Mammary epithelial cell (primary cell): ENCODE measurements at regions of chr1 and their contacts with region 1.

Region 1: DNA sequence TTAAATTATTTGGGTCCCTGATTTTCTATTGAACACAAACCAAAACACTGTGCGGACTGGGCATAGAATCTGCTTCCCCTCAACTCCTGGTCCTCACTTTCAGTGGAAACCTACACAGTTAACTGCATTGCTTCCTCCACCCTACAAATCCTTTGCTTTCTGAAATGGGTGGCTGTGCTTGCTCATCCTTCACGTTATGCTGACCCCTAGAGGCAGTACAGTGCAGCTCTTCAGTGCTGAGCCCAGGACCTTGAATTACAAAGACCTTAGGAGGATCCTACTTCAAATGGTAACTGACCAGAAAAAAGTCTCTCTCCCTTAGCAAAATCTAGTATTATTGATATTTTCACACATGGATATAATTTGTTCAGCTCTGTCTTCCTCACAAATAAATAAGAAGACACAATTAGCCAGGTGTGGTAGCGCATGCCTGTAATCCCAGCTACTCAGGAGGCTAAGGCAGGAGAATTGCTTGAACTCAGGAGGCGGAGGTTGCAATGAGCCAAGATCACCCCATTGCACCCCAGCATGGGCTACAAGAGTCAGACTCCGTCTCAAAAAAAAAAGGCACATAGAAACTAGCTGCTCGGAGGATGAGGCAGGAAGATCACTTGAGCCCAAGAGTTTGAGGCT is 63.4 kb upstream of the L1TD1 start:
- DNase-seq: peak; percentile 25
- H3K4me3 ChIP-seq: no peak overlapping the region
- H3K27ac ChIP-seq: no peak overlapping the region
- H3K4me1 ChIP-seq: no peaks in the 10 kb centered on the region
- H3K27me3 ChIP-seq: no peaks in the 10 kb centered on the region
- CTCF ChIP-seq: peak; percentile 93 to 97

Region 2: GRCh38 chr1:60969971-60970509 is 1161.2 kb before region 1 on chr1:
- CTCF ChIA-PET with region 1: no interaction called
- dilution Hi-C with region 1: no loop called
- in situ Hi-C with region 1: no loop called
- intact Hi-C with region 1: loop called (anchors 5 kb)
- DNase-seq: peak; percentile 46
- H3K4me3 ChIP-seq: no peak overlapping the region
- H3K27ac ChIP-seq: no peak overlapping the region
- H3K4me1 ChIP-seq: peaks cover 33% of the 10 kb centered on the region
- H3K27me3 ChIP-seq: no peaks in the 10 kb centered on the region
- CTCF ChIP-seq: peak; percentile 47 to 52

Region 3: DNA sequence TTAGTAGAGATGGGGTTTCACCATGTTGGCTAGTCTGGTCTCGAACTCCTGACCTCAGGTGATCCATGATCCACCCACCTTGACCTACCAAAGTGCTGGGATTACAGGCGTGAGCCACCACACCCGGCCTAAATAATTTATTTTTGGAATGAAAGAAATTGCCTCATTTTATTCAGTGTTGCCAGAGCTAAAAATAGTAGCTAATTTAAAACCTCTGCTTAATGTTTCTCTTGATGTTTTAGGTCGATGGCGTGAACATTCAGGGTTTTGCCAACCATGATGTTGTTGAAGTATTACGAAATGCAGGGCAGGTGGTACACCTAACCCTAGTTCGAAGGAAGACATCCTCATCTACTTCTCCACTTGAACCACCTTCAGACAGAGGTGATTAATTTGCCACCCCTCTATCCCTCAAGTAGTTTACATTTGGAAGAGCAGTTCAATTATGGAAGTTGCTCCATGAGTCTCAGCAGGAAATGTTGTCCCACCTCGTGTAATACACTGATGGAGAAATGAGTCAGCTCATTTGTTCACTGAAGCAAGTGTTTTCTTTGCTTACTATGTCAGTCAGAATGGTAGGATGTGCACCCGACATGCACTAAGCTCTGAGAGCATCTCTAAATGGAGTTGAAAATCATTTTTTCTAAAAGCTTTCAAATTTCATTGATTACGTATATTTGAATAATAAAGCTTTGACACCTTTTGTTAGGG is 334.0 kb before region 1 on chr1:
- CTCF ChIA-PET with region 1: interaction called, 13 read pairs
- dilution Hi-C with region 1: no loop called
- in situ Hi-C with region 1: no loop called
- intact Hi-C with region 1: no loop called
- DNase-seq: peak; percentile 4
- H3K4me3 ChIP-seq: no peak overlapping the region
- H3K27ac ChIP-seq: no peak overlapping the region
- H3K4me1 ChIP-seq: no peaks in the 10 kb centered on the region
- H3K27me3 ChIP-seq: no peaks in the 10 kb centered on the region
- CTCF ChIP-seq: no peak

Region 4: DNA sequence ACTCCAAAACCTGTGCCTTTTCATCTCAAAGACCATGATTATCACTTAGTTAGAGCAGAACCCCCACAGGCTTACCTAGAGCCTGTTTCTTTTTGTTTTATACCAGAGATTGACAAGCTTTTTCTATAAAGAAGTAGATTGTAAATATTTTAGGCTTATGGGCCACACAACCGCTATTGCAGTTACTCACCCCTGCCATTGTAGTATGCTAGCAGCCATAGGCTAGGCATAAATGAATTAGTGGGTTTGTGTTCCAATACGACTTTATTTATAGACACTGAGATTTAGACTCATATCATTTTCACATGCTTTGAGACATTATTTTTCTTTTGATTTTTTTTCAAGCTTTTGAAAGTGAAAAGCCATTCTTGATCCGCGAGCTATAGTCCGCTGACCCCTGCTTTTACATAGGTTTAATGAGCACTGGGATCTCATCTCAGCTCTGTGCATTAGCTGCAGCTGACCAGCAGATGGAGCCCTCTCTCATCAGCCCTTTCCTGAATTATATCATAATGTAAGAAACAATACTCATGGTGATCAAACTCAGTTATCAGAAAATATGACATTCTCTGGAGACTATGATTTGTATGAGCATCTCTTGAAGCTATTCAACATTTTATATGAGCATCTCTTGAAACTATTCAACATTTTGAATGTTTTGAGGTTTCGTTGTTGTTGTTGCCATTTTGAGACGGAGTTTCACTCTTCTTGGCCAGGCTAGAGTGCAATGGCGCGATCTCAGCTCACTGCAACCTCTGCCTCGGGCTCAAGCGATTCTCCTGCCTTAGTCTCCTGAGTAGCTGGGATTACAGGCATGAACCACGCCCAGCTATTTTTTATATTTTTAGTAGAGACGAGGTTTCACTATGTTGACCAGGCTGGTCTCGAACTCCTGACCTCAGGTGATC is 48.5 kb before region 1 on chr1:
- CTCF ChIA-PET with region 1: interaction called, 22 read pairs
- dilution Hi-C with region 1: no loop called
- in situ Hi-C with region 1: no loop called
- intact Hi-C with region 1: loop called (anchors 1 kb)
- DNase-seq: peak; percentile 22
- H3K4me3 ChIP-seq: no peak overlapping the region
- H3K27ac ChIP-seq: no peak overlapping the region
- H3K4me1 ChIP-seq: no peaks in the 10 kb centered on the region
- H3K27me3 ChIP-seq: no peaks in the 10 kb centered on the region
- CTCF ChIP-seq: peak; percentile 88 to 96

Region 5: GRCh38 chr1:62218604-62219003 is 87.4 kb after region 1 on chr1:
- CTCF ChIA-PET with region 1: no interaction called
- dilution Hi-C with region 1: no loop called
- in situ Hi-C with region 1: no loop called
- intact Hi-C with region 1: no loop called
- DNase-seq: no peak
- H3K4me3 ChIP-seq: no peak overlapping the region
- H3K27ac ChIP-seq: no peak overlapping the region
- H3K4me1 ChIP-seq: no peaks in the 10 kb centered on the region
- H3K27me3 ChIP-seq: no peaks in the 10 kb centered on the region
- CTCF ChIP-seq: no peak

Region 6: DNA sequence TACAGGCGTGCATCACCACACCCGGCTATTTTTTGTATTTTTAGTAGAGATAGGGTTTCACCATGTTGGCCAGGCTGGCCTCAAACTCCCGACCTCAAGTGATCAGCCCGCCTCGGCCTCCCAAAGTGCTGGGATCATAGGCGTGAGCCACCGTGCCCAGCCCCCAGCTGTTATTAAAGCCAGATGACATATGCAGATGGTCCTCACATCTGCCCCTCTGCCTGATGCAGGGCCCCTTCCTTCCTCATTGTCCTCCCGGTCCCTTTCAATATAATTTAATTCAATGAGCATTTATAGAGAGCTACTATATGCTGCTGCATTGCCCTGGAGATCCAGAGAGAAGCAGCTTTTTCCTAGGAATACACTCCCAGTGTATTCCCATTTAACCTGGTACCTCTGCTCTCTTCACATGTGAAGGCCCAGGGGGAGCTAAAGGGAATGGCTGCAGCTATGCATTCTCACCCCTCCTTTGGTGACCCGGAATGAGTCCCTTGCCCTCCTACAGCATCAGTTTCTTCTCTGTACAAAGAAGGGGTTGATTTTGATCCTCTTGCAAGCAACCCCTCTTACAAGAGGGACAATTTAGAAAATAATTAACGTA is 119.0 kb after region 1 on chr1:
- CTCF ChIA-PET with region 1: no interaction called
- dilution Hi-C with region 1: no loop called
- in situ Hi-C with region 1: no loop called
- intact Hi-C with region 1: no loop called
- DNase-seq: no peak
- H3K4me3 ChIP-seq: no peak overlapping the region
- H3K27ac ChIP-seq: no peak overlapping the region
- H3K4me1 ChIP-seq: peaks cover 2% of the 10 kb centered on the region
- H3K27me3 ChIP-seq: no peaks in the 10 kb centered on the region
- CTCF ChIP-seq: no peak